GM12878 (cell line): ENCODE measurements at regions of chr1 and their contacts with region 1.

Region 1: GRCh38 chr1:8848663-8849386 is 29.7 kb downstream of the ENO1 start:
- DNase-seq: no peak
- ATAC-seq: peak; percentile 98
- H3K4me3 ChIP-seq: no peak overlapping the region
- H3K27ac ChIP-seq: no peak overlapping the region
- H3K4me1 ChIP-seq: peaks cover 2% of the 10 kb centered on the region; the same call in 1 of the 2 replicates
- H3K27me3 ChIP-seq: no peaks in the 10 kb centered on the region
- CTCF ChIP-seq: peak; percentile 82 to 95 (median 87)
- EP300 ChIP-seq: no peak
- POLR2A ChIP-seq: no peak
- RAD21 ChIP-seq: peak; percentile 87

Region 2: DNA sequence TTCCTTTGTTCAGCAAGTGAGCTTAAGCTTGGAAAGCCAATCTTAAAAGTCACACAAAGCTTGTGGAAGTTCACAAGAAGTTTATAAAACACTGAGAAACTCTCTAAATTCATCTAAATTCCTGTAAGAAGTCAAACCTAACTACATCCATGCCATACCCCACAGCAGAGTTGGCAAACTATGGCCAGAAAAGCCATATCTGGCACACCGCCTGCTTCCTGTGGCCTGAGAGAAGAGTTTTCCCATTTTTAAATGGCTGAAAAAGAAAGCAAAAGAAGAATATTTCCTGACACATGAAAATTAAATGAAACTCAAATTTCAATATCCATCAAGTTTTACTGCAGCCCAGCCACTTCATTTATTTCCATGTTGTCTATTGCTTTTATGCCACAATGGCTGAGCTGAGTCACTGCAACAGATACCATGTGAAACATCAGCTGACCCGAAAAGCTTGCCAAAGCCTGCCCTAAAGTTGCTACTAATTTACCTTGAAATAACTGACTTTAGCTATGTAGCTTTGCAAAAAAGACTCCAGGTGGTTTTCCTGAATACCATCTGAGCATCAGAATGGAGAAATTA is 293.8 kb before region 1 on chr1:
- CTCF ChIA-PET with region 1: interaction called, 19 read pairs
- POLR2A ChIA-PET with region 1: interaction called, 3 read pairs
- RAD21 ChIA-PET with region 1: interaction called, 64 read pairs
- SMC1A ChIA-PET with region 1: interaction called, 54 read pairs
- in situ Hi-C with region 1: loop called (anchors 5 kb)
- intact Hi-C with region 1: no loop called
- DNase-seq: no peak
- ATAC-seq: peak; percentile 71
- H3K4me3 ChIP-seq: no peak overlapping the region
- H3K27ac ChIP-seq: no peak overlapping the region; the same call in 1 of the 2 replicates
- H3K4me1 ChIP-seq: peaks cover 9% of the 10 kb centered on the region
- H3K27me3 ChIP-seq: no peaks in the 10 kb centered on the region
- CTCF ChIP-seq: no peak
- EP300 ChIP-seq: no peak
- POLR2A ChIP-seq: no peak
- RAD21 ChIP-seq: no peak

Region 3: DNA sequence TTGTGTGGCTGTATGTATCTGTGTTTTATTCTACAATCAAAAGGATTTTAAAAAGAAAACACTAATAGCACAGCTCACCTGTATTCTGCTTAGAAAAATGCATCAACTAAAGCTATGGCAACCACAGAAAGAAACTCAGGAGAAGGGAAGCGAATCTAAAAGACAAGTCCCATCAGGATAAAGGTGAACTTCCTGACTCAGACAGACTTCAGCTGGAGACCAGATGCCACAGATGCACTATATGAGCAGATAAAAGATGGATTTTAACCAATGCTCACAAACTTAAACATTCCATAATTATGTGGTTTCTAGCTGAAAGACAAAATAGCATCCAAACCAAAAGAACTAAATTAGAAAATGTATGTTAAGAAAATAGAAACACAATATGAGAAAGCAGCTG is 262.4 kb before region 1 on chr1:
- CTCF ChIA-PET with region 1: interaction called, 10 read pairs
- POLR2A ChIA-PET with region 1: no interaction called
- RAD21 ChIA-PET with region 1: interaction called, 4 read pairs
- SMC1A ChIA-PET with region 1: interaction called, 4 read pairs
- in situ Hi-C with region 1: no loop called
- intact Hi-C with region 1: no loop called
- DNase-seq: no peak
- ATAC-seq: no peak
- H3K4me3 ChIP-seq: no peak overlapping the region
- H3K27ac ChIP-seq: no peak overlapping the region
- H3K4me1 ChIP-seq: peaks cover 4% of the 10 kb centered on the region; the same call in 1 of the 2 replicates
- H3K27me3 ChIP-seq: no peaks in the 10 kb centered on the region
- CTCF ChIP-seq: no peak
- EP300 ChIP-seq: no peak
- POLR2A ChIP-seq: no peak
- RAD21 ChIP-seq: no peak

Region 4: GRCh38 chr1:8702850-8703810 is 145.7 kb before region 1 on chr1:
- CTCF ChIA-PET with region 1: interaction called, 16 read pairs
- POLR2A ChIA-PET with region 1: no interaction called
- RAD21 ChIA-PET with region 1: interaction called, 4 read pairs
- SMC1A ChIA-PET with region 1: interaction called, 3 read pairs
- in situ Hi-C with region 1: no loop called
- intact Hi-C with region 1: no loop called
- DNase-seq: no peak
- ATAC-seq: peak; percentile 75
- H3K4me3 ChIP-seq: peak overlapping the region; percentile 57
- H3K27ac ChIP-seq: peak overlapping the region; percentile 54
- H3K4me1 ChIP-seq: no peaks in the 10 kb centered on the region; the same call in 1 of the 2 replicates
- H3K27me3 ChIP-seq: no peaks in the 10 kb centered on the region
- CTCF ChIP-seq: peak; percentile 6 to 55 (median 17); a peak in 3 of 6 replicates
- EP300 ChIP-seq: no peak
- POLR2A ChIP-seq: peak; percentile 87
- RAD21 ChIP-seq: peak; percentile 29; the same call in 1 of the 2 replicates

Region 5: GRCh38 chr1:8763888-8764287 is 84.9 kb before region 1 on chr1:
- CTCF ChIA-PET with region 1: interaction called, 11 read pairs
- POLR2A ChIA-PET with region 1: no interaction called
- RAD21 ChIA-PET with region 1: interaction called, 5 read pairs
- SMC1A ChIA-PET with region 1: interaction called, 5 read pairs
- in situ Hi-C with region 1: no loop called
- intact Hi-C with region 1: no loop called
- DNase-seq: peak; percentile 84
- ATAC-seq: peak; percentile 75
- H3K4me3 ChIP-seq: peak overlapping the region; percentile 8; the same call in 1 of the 2 replicates
- H3K27ac ChIP-seq: peak overlapping the region; percentile 93
- H3K4me1 ChIP-seq: peaks cover 29% of the 10 kb centered on the region
- H3K27me3 ChIP-seq: no peaks in the 10 kb centered on the region
- CTCF ChIP-seq: peak; percentile 15 to 31 (median 19); a peak in 3 of 6 replicates
- EP300 ChIP-seq: no peak
- POLR2A ChIP-seq: no peak; the same call in 1 of the 2 replicates
- RAD21 ChIP-seq: no peak

Region 6: GRCh38 chr1:8817406-8818324 is 31.2 kb before region 1 on chr1 and contains the start of gene RERE:
- CTCF ChIA-PET with region 1: interaction called, 28 read pairs
- POLR2A ChIA-PET with region 1: interaction called, 5 read pairs
- RAD21 ChIA-PET with region 1: interaction called, 22 read pairs
- SMC1A ChIA-PET with region 1: interaction called, 17 read pairs
- in situ Hi-C with region 1: no loop called
- intact Hi-C with region 1: no loop called
- DNase-seq: peak; percentile 74
- ATAC-seq: peak; percentile 92
- H3K4me3 ChIP-seq: peak within 1 kb of the TSS; percentile 91
- H3K27ac ChIP-seq: peak within 1 kb of the TSS; percentile 95
- H3K4me1 ChIP-seq: no peaks in the 10 kb centered on the region
- H3K27me3 ChIP-seq: no peaks in the 10 kb centered on the region
- CTCF ChIP-seq: 0 out of 6 replicates have a peak, but pooled peaks of 1 of the 3 experiments have one; percentile 0
- EP300 ChIP-seq: no peak
- POLR2A ChIP-seq: peak; percentile 92
- RAD21 ChIP-seq: no peak
- polyA plus RNA-seq, gene RERE: 5.2 to 5.9 TPM

Region 7: GRCh38 chr1:8908388-8909151 is 59.7 kb after region 1 on chr1:
- CTCF ChIA-PET with region 1: no interaction called
- POLR2A ChIA-PET with region 1: no interaction called
- RAD21 ChIA-PET with region 1: no interaction called
- SMC1A ChIA-PET with region 1: no interaction called
- in situ Hi-C with region 1: no loop called
- intact Hi-C with region 1: no loop called
- DNase-seq: no peak
- ATAC-seq: no peak
- H3K4me3 ChIP-seq: no peak overlapping the region
- H3K27ac ChIP-seq: no peak overlapping the region
- H3K4me1 ChIP-seq: no peaks in the 10 kb centered on the region
- H3K27me3 ChIP-seq: no peaks in the 10 kb centered on the region; a peak in 2 of 4 replicates
- CTCF ChIP-seq: no peak
- EP300 ChIP-seq: no peak
- POLR2A ChIP-seq: no peak
- RAD21 ChIP-seq: no peak